Dendritic cell treated with granulocyte-macrophage colony-stimulating factor and Interleukin-4, amounts not matched to agents 40 ng/mL and 50 ng/mL, for 4 days (primary cell): ENCODE measurements at regions of chr1 and their contacts with region 1.

Region 1: GRCh38 chr1:170586321-170587252 is 54.6 kb downstream of the GORAB start:
- H3K4me3 Mint-ChIP-seq: peak overlapping the region; percentile 20
- H3K27ac Mint-ChIP-seq: no peak overlapping the region
- H3K4me1 Mint-ChIP-seq: peaks cover 9% of the 10 kb centered on the region
- H3K27me3 Mint-ChIP-seq: peaks cover 11% of the 10 kb centered on the region

Region 2: GRCh38 chr1:170410401-170411166 is 176.0 kb before region 1 on chr1:
- intact Hi-C with region 1: loop called (anchors 10 kb)
- H3K4me3 Mint-ChIP-seq: no peak overlapping the region
- H3K27ac Mint-ChIP-seq: no peak overlapping the region
- H3K4me1 Mint-ChIP-seq: no peaks in the 10 kb centered on the region
- H3K27me3 Mint-ChIP-seq: no peaks in the 10 kb centered on the region